ENCODE measurements at regions of chr3 and their contacts with region 1.

Region 1: DNA sequence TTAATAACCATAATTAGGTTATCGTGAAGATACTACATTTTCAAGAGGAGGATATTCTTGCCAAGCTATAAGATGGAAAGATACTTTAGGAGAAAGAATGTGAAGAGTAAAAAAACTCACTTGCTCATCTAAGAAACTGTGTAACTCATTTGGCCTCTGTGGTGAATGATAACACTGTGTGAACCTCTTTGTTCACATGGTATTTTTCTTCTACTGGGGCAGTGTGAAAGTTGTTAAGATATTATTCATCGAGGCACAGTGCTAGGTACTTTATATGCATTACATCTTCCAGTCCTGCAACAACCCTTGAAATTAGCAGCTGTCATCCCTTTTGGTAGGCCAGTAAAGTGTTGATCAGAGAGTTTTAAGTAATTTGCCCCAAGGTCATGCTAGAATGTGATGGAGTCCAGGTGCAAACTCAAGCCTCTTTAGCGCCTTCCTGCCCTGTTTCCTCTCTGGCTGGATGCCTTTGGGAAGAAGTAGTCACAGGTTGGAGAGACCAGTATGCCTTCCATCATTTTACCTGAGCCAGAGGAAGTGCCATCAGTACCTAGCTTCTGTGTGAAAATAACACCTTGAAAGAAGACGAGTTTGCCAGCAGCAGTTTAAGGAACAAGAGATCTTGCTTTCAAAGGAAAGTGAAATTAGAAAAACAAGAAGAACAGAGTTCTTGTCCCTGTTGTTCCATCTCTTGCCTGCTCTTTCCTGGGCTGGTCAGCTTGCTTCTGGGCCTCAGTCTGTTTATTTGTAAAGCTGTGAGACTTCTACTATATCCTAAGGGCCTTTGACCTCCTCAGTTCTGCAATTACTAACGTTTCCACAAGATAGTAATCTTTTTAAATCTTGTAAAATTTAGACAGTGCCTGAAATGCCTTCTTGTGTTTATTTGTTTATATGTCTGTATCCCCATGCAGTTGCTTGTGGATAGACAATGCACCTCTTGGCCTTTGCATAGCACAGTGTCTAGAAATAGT is 179.3 kb downstream of the FNDC3B start:
- DNase-seq: no peak
- H3K4me3 ChIP-seq: no peak overlapping the region
- CTCF ChIP-seq: no peak

Region 2: DNA sequence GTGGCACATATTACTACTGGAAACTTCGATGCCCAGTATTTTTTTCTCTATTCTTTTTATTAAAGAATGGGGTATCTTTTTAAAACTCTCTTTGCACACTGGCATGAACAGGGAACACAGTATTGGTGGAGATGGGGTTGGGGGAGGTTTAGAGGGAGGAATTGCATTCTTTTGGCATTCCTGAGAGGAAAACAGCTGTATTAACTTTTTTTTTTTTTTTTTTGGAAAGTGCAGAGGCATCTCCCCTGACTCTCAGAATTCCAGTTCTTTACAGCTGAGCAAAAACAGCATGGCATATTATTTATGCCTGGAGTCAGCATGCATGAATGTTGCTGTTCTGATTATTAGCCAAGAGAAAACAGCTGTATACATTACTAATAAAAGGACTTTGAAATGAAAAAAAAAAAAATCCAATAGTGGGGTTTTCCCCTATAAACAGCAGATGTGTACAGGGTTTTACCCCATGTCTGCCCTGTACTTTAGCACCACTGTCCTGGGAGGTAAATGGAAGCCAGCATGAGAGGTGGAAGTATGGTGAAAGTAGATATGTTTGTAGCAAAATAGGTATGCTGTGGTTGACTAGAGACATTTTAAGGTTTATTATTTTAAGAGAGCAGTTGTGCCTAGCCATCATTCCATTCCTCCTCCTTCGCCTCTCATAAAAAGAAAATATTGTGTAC is 47.1 kb before region 1 on chr3:
- in situ Hi-C with region 1: no loop called
- DNase-seq: no peak
- H3K4me3 ChIP-seq: no peak overlapping the region
- CTCF ChIP-seq: no peak

Region 3: GRCh38 chr3:172256101-172256734 is 37.6 kb after region 1 on chr3:
- in situ Hi-C with region 1: loop called (anchors 5 kb)
- DNase-seq: no peak
- H3K4me3 ChIP-seq: no peak overlapping the region
- CTCF ChIP-seq: no peak

Region 4: GRCh38 chr3:172294223-172294806 is 75.7 kb after region 1 on chr3:
- in situ Hi-C with region 1: no loop called
- DNase-seq: no peak
- H3K4me3 ChIP-seq: no peak overlapping the region
- CTCF ChIP-seq: no peak

Measured in astrocyte of the cerebellum (primary cell).